ENCODE measurements at regions of chr5 and their contacts with region 1.

Region 1: GRCh38 chr5:157108976-157109375 is at the start of gene HAVCR2:
- DNase-seq: peak; percentile 90
- H3K4me3 Mint-ChIP-seq: peak within 1 kb of the TSS; percentile 97
- H3K27ac Mint-ChIP-seq: peak within 1 kb of the TSS; percentile 98
- H3K4me1 Mint-ChIP-seq: peaks cover 58% of the 10 kb centered on the region
- H3K27me3 Mint-ChIP-seq: no peaks in the 10 kb centered on the region
- total RNA-seq, gene HAVCR2: 70.0 and 73.1 TPM in 2 replicates

Region 2: DNA sequence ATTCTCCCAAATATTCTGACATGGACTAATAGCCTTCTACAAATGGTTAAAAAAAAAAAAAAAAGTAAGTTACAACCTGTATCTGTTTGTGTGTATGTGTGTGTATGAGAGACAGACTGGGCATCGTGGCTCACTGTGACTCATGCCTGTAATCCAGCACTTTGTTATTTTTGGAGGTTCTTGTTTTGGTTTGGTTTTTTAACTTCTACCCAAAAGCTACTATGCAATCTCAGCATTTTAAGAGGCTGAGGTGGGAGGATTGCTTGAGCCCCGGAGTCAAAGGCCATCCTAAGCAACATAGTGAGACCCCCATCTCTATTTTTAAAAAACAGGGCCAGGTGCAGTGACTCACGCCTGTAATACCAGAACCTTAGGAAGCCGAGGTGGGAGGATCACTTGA is 32.4 kb before region 1 on chr5:
- intact Hi-C with region 1: loop called (anchors 2 kb)
- DNase-seq: peak; percentile 62
- H3K4me3 Mint-ChIP-seq: no peak overlapping the region
- H3K27ac Mint-ChIP-seq: peak overlapping the region; percentile 59
- H3K4me1 Mint-ChIP-seq: peaks cover 45% of the 10 kb centered on the region
- H3K27me3 Mint-ChIP-seq: no peaks in the 10 kb centered on the region

Region 3: DNA sequence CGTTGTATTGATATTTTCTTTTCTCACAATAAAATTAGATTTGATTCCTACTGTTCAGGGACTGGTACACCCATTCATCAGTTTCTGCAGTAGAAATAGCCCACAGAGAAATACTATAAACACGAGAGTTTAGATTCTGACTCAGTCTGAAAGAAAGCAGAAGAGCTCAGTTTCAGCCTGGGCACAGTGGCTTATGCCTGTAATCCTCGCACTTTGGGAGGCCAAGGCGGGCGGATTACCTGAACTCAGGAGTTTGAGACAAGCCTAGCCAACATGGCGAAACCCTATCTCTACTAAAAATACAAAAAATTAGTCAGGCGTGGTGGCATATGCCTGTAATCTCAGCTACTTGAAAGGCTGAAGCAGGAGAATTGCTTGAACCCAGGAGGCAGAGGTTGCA is 80.2 kb after region 1 on chr5:
- intact Hi-C with region 1: loop called (anchors 10 kb)
- DNase-seq: peak; percentile 76
- H3K4me3 Mint-ChIP-seq: peak overlapping the region; percentile 83
- H3K27ac Mint-ChIP-seq: peak overlapping the region; percentile 92
- H3K4me1 Mint-ChIP-seq: peaks cover 70% of the 10 kb centered on the region
- H3K27me3 Mint-ChIP-seq: no peaks in the 10 kb centered on the region

Region 4: GRCh38 chr5:158435161-158435616 is 1326.2 kb after region 1 on chr5:
- intact Hi-C with region 1: loop called (anchors 10 kb)
- DNase-seq: peak; percentile 81
- H3K4me3 Mint-ChIP-seq: peak overlapping the region; percentile 76
- H3K27ac Mint-ChIP-seq: peak overlapping the region; percentile 83
- H3K4me1 Mint-ChIP-seq: peaks cover 48% of the 10 kb centered on the region
- H3K27me3 Mint-ChIP-seq: no peaks in the 10 kb centered on the region

Measured in activated CD4-positive, alpha-beta T cell treated with anti-CD3 and anti-CD28 coated beads, Interleukin-2, amount 10 ng/mL, durations not matched to agents 24 days and 14 days (primary cell).